PC-3 (cell line): ENCODE measurements at regions of chr11 and their contacts with region 1.

Region 1: DNA sequence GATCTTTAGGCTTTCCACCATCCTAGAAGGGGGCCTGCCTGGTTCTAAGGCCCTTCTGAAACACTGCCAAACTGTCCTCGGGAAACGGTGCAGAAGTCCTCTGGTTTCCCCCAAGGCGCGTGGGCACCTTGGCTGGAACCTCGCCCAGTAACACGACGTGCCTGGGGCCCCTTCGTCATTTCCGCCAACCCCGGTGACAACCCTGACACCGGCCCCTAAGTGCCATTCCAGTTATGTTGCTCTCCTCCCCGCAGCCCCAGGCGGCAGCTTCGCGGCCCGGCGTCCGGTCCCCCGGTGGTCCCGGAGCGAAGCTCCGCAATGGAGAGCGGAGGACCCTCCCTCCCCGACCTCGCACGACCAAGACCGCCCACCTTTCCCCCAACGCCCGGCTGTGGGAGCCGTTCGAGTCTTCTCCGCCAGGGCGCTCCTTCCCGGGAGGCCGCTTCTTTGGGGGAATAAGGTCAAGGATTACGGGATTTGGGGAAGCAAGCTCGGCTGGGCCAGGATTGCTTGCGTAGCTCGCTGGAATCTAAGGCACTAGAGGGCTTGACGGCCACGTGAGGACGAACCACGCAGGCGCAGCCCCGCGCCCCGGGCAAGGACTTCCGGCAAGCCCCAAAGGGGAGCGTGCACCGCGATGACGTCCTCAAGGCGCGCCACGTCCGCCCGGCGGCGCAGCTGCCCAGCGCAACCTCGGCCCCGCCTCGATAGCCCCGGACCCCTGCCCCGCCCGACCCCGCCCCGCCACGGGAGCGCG is 626 bp downstream of the RNH1 start:
- DNase-seq: peak; percentile 95
- ATAC-seq: peak; percentile 72
- H3K4me3 ChIP-seq: peak overlapping the region; percentile 88
- H3K27ac ChIP-seq: peak overlapping the region; percentile 100
- H3K4me1 ChIP-seq: peaks cover 12% of the 10 kb centered on the region
- H3K27me3 ChIP-seq: no peaks in the 10 kb centered on the region
- CTCF ChIP-seq: no peak

Region 2: GRCh38 chr11:469684-470560 is 36.5 kb before region 1 on chr11:
- CTCF ChIA-PET with region 1: no interaction called
- POLR2A ChIA-PET with region 1: interaction called, 3 read pairs
- intact Hi-C with region 1: loop called (anchors 5 kb)
- DNase-seq: peak; percentile 34
- ATAC-seq: peak; percentile 97
- H3K4me3 ChIP-seq: 0 out of 2 replicates have a peak overlapping the region, but pooled peaks have one; percentile 31
- H3K27ac ChIP-seq: no peak overlapping the region
- H3K4me1 ChIP-seq: peaks cover 7% of the 10 kb centered on the region; the same call in 1 of the 2 replicates
- H3K27me3 ChIP-seq: no peaks in the 10 kb centered on the region
- CTCF ChIP-seq: 0 out of 2 replicates have a peak, but pooled peaks have one; percentile 20

Region 3: DNA sequence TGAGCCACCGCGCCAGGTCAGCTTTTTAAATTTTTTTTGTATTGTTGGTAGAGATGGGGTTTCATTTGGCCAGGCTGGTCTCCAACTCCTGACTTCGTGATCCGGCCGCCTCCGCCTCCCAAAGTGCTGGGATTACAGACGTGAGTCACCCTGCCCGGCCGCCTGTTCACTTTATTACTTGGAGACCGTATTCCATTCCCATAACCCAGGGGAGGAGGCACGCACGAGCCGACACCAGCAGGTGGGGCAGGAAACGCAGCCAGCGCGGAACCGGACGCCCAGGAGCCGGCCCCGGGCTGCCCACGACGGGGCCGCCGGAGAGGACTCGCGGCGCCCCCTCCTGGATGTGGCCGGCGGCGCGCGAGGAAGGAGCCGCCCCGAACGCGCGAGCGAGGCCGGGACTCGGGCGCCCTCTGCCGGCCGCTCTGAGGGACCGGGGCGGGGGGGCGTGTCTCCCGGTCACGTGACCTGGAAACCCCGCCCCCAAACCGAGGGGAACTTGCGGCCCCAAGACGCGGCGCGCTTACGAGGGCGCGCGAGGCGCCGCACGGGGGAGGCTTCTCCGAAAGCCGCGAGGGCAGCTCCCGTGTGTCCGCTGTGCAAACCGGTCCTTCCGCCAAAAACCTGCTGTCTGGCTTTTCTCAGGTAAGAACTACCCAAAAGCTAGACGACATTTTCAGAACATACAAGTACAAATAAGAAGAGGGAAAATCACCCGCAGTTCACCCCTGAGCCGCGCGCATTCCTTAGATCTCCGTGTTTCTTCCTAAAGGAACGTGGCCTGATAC is 12.2 kb after region 1 on chr11:
- CTCF ChIA-PET with region 1: interaction called, 3 read pairs
- POLR2A ChIA-PET with region 1: interaction called, 3 read pairs
- intact Hi-C with region 1: loop called (anchors 1 kb)
- DNase-seq: peak; percentile 95
- ATAC-seq: peak; percentile 100
- H3K4me3 ChIP-seq: no peak overlapping the region
- H3K27ac ChIP-seq: peak overlapping the region; percentile 51
- H3K4me1 ChIP-seq: no peaks in the 10 kb centered on the region
- H3K27me3 ChIP-seq: no peaks in the 10 kb centered on the region
- CTCF ChIP-seq: peak; percentile 91

Region 4: GRCh38 chr11:535519-536454 is 29.4 kb after region 1 on chr11 and contains the start of gene HRAS:
- CTCF ChIA-PET with region 1: no interaction called
- POLR2A ChIA-PET with region 1: no interaction called
- intact Hi-C with region 1: loop called (anchors 2 kb)
- DNase-seq: peak; percentile 94
- ATAC-seq: peak; percentile 77
- H3K4me3 ChIP-seq: peak within 1 kb of the TSS; percentile 89
- H3K27ac ChIP-seq: peak within 1 kb of the TSS; percentile 63
- H3K4me1 ChIP-seq: peaks cover 17% of the 10 kb centered on the region
- H3K27me3 ChIP-seq: no peaks in the 10 kb centered on the region
- CTCF ChIP-seq: no peak
- total RNA-seq, gene HRAS: 128 and 167 TPM in 2 replicates

Region 5: DNA sequence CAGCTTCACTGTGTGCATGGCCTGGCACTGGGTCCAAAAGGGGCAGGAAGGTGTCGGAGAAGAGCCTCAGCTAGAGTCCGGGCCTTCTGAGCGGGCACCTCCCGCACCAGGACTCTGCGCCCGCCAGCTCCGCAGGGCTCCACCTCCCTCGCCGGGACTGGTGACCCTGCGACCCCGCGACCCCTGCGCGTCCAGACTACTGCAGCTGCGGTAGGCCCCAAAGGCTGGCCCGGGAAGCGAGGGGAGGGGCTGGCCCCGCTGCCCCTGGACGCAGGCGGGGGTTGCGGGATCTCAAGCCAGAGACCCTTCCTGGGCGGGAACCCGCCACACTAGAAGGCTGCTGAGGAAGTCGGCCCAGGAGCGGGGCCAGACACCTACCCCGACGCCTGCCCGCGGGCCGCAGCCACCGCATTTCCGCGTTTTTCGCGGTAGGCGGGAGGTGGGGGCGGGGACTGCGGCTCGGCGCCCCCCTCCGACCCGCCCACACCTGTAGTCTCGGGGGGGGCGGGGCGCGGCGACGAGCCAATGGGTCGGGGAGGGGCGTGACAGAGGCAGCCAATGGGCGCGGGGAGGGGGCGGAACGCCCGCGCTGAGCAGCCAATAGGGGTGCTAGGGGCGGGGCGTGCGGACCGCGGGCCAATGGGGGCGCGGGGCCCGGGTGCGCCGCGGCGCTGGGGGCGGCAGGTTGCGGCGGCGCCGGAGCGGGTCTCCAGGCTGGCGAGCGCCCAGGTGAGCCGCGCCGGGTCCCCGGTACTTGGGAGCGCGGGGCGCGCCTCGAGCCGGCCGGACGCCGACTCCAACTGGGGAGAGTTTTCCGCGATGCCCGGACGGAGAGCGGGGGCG is 54.1 kb after region 1 on chr11 and contains the starts of genes LMNTD2 and RASSF7:
- CTCF ChIA-PET with region 1: no interaction called
- POLR2A ChIA-PET with region 1: no interaction called
- intact Hi-C with region 1: no loop called
- DNase-seq: peak; percentile 89
- ATAC-seq: peak; percentile 71
- H3K4me3 ChIP-seq: peak within 1 kb of the TSS; percentile 89
- H3K27ac ChIP-seq: peak within 1 kb of the TSS; percentile 45
- H3K4me1 ChIP-seq: peaks cover 24% of the 10 kb centered on the region
- H3K27me3 ChIP-seq: peaks cover 2% of the 10 kb centered on the region; the same call in 1 of the 2 replicates
- CTCF ChIP-seq: no peak
- total RNA-seq, gene LMNTD2: 1.4 and 2.4 TPM in 2 replicates
- total RNA-seq, gene RASSF7: 58.6 and 79.7 TPM in 2 replicates